ENCODE measurements at regions of chr1 and their contacts with region 1.

Region 1: DNA sequence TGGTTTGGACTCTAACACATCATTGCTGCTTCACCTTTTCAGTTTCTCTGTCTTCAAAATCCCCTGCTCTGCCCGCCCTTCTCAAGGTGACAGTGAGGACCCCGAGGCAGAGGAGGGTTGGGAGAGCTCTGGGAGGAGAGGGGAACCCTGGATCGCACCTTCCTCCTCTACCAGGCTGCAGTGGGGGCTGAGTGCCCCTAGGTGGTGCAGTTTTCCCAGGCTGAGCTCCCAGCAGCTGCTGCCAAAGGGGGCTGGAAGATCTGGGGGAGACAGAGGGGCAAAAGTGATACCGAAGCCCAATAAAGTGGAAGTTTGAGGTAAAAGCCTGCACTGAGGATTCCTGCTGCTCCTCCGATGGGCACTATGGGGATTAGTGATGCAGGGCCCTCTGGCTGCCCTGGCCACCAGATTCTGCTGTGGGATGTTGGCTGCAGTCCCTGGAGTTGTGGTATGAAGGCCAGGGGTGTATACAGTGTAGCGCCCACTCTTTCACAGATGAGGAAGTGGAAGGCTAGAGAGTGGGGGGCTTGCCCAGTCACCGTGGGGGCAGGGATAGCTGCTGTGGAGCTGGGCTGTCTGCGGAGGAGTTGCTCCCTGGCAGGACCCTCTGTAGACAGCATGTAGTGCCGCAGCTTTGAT is 40.7 kb upstream of the SCMH1 start:
- DNase-seq: peak; percentile 45
- H3K4me3 ChIP-seq: no peak overlapping the region
- H3K27ac ChIP-seq: no peak overlapping the region
- H3K4me1 ChIP-seq: peaks cover 28% of the 10 kb centered on the region
- H3K27me3 ChIP-seq: no peaks in the 10 kb centered on the region
- CTCF ChIP-seq: peak; percentile 45 to 78 (median 71)
- POLR2A ChIP-seq: no peak

Region 2: DNA sequence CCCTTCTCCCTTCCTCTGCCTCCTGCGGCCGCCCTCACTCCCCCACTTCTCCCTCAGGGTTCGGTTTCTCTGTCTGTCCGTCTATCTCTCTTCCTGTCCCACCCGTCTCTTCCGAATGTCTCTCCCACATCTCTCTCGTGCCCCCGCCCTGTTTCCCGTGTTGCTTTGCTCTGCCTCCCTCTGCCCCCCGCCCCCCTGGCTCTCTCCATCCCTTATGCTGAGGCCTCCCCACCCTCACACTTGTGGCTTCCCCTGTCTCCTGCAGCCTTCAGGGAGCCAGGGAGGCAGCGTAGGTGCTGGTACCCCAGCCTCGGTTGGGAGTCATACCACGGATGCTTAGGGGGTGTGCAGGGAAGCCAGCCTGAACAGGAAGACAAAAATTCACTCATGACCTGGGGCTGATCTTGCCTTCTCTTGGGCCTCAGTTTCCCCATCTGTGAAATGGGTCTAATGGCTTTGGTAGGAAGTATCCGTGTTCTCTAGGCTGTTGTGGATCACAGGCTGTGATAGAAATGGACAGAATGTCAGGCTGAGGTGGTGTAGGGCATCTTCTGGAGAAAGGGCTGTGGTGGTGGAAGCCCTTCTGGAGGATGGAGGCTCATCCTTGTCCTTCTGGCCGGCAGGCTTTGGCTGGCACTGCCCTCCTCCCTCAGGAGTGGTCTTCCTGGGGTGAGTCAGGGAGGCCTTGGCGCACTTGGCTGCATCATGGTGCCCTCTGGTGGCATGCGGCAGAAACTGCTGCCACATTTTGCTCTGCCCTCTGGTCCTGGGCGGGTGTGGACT is 133.9 kb after region 1 on chr1:
- intact Hi-C with region 1: loop called (anchors 5 kb)
- DNase-seq: peak; percentile 60
- H3K4me3 ChIP-seq: no peak overlapping the region
- H3K27ac ChIP-seq: no peak overlapping the region
- H3K4me1 ChIP-seq: no peaks in the 10 kb centered on the region
- H3K27me3 ChIP-seq: no peaks in the 10 kb centered on the region
- CTCF ChIP-seq: peak; percentile 70 to 88 (median 84)
- POLR2A ChIP-seq: no peak

Region 3: DNA sequence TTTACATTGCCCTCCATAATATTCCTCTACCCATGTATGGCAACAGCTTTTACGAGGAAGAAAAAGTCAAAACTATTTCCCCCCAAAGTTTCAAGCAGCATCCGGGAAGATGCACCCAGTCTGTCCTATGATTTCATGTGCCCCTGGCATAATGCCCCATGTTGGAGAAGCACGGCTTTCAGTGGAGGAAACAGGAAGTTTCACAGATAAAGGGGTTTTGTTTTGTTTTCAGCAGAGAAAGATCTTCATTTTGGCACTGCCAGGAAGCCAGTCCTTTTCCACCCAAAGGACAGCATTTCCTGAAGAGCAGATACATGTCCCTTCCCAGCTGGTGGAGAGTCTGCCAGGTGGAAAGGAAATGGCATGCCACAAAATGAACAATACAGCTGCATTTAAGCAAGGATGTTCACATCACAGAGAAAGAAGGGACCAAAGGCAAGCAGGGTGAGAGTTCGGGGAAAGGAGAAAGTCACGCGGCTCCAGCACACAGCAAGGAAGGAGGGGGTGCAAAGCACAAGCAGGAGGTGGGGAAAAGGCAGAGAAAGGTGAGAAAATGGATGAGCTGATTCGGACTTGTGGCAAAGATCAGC is 731.2 kb after region 1 on chr1:
- intact Hi-C with region 1: loop called (anchors 10 kb)
- DNase-seq: peak; percentile 33
- H3K4me3 ChIP-seq: no peak overlapping the region
- H3K27ac ChIP-seq: no peak overlapping the region
- H3K4me1 ChIP-seq: no peaks in the 10 kb centered on the region
- H3K27me3 ChIP-seq: no peaks in the 10 kb centered on the region
- CTCF ChIP-seq: no peak
- POLR2A ChIP-seq: no peak